Gastrocnemius medialis (tissue), 4 donors: ENCODE measurements at regions of chr17 and their contacts with region 1.

Region 1: DNA sequence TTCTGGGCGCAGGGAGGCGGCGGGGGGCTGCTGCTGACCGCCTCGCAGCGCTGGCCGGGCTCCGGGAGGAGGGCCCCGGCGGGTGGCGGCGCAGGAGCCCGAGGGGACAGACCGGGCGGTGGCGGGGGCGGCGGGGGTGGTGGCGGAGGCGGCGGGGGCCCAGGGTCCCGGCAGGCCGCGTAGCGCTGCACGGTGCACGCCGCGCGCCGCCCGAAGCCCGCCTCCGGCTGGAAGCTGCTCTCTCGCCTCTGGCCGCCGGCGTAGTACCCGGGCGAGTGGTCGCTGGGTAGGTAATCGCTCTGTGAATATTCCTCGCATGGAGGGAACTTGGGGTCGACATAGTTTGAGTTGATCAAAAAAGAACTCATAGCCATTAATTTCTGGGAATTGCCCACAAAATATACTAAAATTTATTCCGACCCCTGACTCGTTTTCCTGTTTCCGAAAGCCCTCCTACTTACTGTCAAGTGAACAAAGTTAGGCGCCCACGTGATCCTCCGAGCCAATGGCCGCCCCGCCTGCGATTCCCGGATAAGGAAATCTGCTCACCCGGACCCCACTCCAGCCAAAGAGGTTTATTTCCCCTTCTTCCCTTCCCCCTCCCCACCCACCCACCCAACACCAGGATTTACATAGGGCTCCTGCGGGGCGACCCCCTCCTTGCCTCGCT is at the start of gene HOXB4:
- DNase-seq: peak; percentile 59 to 64
- ATAC-seq: peak; percentile 78 to 83
- H3K4me3 ChIP-seq: peak within 1 kb of the TSS; percentile 60 to 69 (median 66)
- H3K27ac ChIP-seq: peak within 1 kb of the TSS; percentile 72 to 83 (median 76)
- H3K4me1 ChIP-seq: peaks cover 5% of the 10 kb centered on the region in 2 donors
- H3K27me3 ChIP-seq: peaks cover 30 to 79% (median 77%) of the 10 kb centered on the region in 3 donors
- CTCF ChIP-seq: no peak
- POLR2A ChIP-seq: peak; percentile 15 to 36
- total RNA-seq, gene HOXB4: 0.18 to 1.8 (median 0.51) TPM

Region 2: GRCh38 chr17:47852093-47852949 is 725.8 kb before region 1 on chr17:
- in situ Hi-C with region 1: no loop called
- intact Hi-C with region 1: no loop called
- DNase-seq: no peak
- ATAC-seq: no peak
- H3K4me3 ChIP-seq: no peak overlapping the region
- H3K27ac ChIP-seq: no peak overlapping the region
- H3K4me1 ChIP-seq: peaks cover 5 to 16% of the 10 kb centered on the region in 2 donors
- H3K27me3 ChIP-seq: peaks cover 94 to 98% (median 94%) of the 10 kb centered on the region in 3 donors
- CTCF ChIP-seq: no peak
- POLR2A ChIP-seq: no peak

Region 3: GRCh38 chr17:48543107-48543853 is 34.8 kb before region 1 on chr17:
- in situ Hi-C with region 1: no loop called
- intact Hi-C with region 1: loop called (anchors 2 kb)
- DNase-seq: peak in 1 of 2 donors; percentile 31
- ATAC-seq: peak; percentile 54 to 62
- H3K4me3 ChIP-seq: peak overlapping the region; percentile 59 to 76 (median 68)
- H3K27ac ChIP-seq: peak overlapping the region; percentile 80 to 94 (median 85)
- H3K4me1 ChIP-seq: peaks cover 10 to 40% of the 10 kb centered on the region in 2 donors
- H3K27me3 ChIP-seq: peaks cover 16 to 33% (median 20%) of the 10 kb centered on the region in 3 donors
- CTCF ChIP-seq: peak; percentile 7 to 50 (median 33)
- POLR2A ChIP-seq: peak; percentile 17 to 33

Region 4: DNA sequence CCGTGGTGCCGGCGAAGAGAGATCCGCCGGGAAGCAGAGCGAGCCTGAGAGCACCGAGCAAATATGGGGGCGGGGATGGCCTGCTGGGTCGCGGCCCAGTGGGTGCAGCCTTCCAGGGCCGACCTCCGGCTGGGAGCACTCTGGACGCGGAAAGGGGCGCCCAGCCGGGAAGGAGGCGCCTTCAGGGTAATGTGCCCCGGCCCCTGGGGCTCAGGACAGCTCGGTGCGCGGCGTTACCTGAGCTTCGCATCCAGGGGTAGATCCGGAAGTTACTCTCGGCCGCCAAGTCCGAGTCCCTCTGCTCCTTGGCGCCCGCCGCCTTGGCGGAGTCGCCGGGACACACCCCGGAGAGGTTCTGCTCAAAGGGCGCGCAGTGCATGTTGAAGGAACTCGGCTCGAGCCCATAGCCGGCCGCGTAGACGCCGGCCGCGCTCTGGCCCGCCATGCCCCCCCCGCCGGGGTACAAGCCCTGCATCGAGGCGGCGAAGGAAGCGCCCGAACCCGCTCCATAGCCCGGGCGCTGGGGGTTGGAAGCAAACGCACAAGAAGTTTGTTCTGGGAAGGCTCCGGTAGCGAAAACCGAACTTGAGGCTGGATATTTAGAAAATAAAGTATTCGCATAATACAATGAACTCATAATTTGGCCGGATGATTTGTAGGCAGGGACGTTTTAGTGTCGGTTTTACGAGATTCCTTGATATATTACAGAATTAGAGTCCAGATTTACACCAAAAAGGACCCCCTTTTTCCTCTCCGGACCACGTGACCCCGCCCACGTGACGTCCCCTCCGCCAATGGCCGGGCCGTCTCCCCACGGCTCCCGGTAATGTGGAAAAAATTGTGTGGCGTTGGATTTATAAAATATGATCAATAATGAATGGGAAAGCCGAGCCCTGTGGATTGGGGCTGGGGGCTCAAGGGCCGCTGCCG is 32.5 kb after region 1 on chr17 and contains the start of gene HOXB7:
- in situ Hi-C with region 1: no loop called
- intact Hi-C with region 1: loop called (anchors 2 kb)
- DNase-seq: peak in 1 of 2 donors; percentile 39
- ATAC-seq: peak; percentile 25 to 48
- H3K4me3 ChIP-seq: peak within 1 kb of the TSS; percentile 45 to 64 (median 56)
- H3K27ac ChIP-seq: peak within 1 kb of the TSS; percentile 16 to 66 (median 65)
- H3K4me1 ChIP-seq: peaks cover 4 to 27% of the 10 kb centered on the region in 2 donors
- H3K27me3 ChIP-seq: peaks cover 94 to 98% (median 98%) of the 10 kb centered on the region in 3 donors
- CTCF ChIP-seq: no peak
- POLR2A ChIP-seq: no peak
- total RNA-seq, gene HOXB7: 0.36 to 3.0 (median 0.65) TPM

Region 5: DNA sequence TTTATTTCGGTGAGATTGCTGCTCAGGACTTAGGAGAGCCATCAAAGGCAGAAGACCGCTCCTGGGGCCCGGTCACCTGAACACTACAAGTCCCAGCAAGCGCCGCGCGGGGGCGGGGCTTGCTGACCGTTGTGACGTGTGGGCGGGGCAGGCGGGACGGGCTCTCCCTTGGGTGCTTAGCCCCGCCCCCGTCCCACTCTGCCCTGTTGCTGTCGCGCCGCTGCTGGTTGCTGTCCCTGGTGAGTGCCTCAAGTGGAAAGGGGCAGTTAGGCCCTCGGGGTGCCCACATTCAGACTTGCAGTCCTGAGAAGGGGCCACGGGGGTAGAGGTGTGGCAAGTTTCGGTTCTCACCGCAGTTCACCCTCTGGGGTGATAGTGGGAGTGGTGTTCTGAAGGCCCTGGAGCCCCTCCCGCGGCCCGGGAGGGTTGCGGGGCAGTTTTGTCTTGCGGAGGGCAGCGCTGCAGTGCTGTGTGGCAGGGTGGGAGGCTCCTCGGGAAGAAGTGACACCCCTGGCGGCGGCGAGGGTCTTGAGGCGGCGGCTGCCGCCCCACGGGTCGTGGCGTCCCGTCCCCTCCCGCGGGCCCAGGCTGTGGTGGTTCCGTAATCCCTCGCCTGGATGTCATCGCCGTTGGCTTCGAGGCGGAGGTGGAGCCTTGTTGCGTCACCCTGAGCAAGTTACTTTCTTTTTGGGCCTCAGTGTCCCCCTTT is 252.9 kb after region 1 on chr17 and contains the start of gene CALCOCO2:
- in situ Hi-C with region 1: no loop called
- intact Hi-C with region 1: no loop called
- DNase-seq: peak; percentile 93 to 94
- ATAC-seq: peak; percentile 93 to 95
- H3K4me3 ChIP-seq: peak within 1 kb of the TSS; percentile 90 to 95 (median 92)
- H3K27ac ChIP-seq: peak within 1 kb of the TSS; percentile 98 to 99 (median 98)
- H3K4me1 ChIP-seq: peaks cover 43 to 47% of the 10 kb centered on the region in 2 donors
- H3K27me3 ChIP-seq: no peaks in the 10 kb centered on the region
- CTCF ChIP-seq: peak in 4 of 5 experiments; percentile 9 to 13 (median 10)
- POLR2A ChIP-seq: peak; percentile 93 to 96
- total RNA-seq, gene CALCOCO2: 104 to 237 (median 132) TPM